Activated T-helper 1 cell treated with anti-CD3 and anti-CD28 coated beads, Interleukin-12 subunit alpha, Interleukin-12 subunit beta, Interleukin-2, Interleukin-4 antibody, amounts not matched to agents 30 ng/mL and 10 ng/mL and 1 ng/mL, durations not matched to agents 14 hours and 24 hours and 36 hours (primary cell): ENCODE measurements at regions of chr7 and their contacts with region 1.

Region 1: DNA sequence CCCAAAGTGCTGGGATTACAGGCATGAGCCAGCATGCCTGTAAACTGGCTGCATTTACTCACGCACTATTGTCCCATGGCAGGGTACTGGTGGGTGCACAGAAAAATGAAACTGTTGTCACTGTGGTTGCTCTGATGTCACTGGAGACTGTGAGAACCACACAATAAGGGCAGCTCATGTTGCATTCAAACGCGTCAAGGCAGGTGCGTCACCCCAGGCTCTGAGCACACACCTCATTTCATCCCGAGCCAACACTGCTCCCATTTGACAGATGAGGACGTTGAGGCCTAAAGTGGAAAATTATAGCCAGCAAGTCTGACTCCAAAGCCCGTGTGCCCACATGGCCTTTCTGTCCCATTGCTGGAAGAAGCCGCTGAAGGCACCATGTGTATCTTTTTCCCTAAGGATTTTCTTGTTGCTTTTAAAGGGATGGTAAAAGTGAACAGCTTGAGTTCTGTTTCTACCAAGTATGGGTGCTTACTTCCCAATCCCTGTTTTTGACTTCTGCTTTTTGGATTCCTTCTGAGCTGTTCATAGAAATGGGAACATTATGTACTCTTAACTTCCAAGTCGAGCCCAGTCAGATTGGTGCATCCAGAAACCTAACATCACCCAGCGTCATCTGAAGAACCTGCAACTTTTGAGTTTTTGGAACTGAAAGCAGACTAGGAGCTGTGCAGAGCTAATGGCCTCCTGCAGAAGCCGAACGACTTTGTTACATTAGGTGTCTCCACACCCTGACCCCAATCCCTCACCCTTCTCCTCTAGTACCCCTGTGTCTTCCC is 60.1 kb upstream of the CARD11 start:
- DNase-seq: no peak
- H3K4me3 Mint-ChIP-seq: no peak overlapping the region
- H3K27ac Mint-ChIP-seq: peak overlapping the region; percentile 32
- H3K4me1 Mint-ChIP-seq: peaks cover 70% of the 10 kb centered on the region
- H3K27me3 Mint-ChIP-seq: no peaks in the 10 kb centered on the region

Region 2: GRCh38 chr7:2956526-2957368 is 147.1 kb before region 1 on chr7:
- intact Hi-C with region 1: loop called (anchors 5 kb)
- DNase-seq: peak; percentile 44
- H3K4me3 Mint-ChIP-seq: peak overlapping the region; percentile 27
- H3K27ac Mint-ChIP-seq: peak overlapping the region; percentile 92
- H3K4me1 Mint-ChIP-seq: peaks cover 71% of the 10 kb centered on the region
- H3K27me3 Mint-ChIP-seq: no peaks in the 10 kb centered on the region

Region 3: GRCh38 chr7:3042861-3043489 is 60.8 kb before region 1 on chr7:
- intact Hi-C with region 1: loop called (anchors 2 kb)
- DNase-seq: peak; percentile 65
- H3K4me3 Mint-ChIP-seq: peak overlapping the region; percentile 97
- H3K27ac Mint-ChIP-seq: peak overlapping the region; percentile 95
- H3K4me1 Mint-ChIP-seq: peaks cover 47% of the 10 kb centered on the region
- H3K27me3 Mint-ChIP-seq: no peaks in the 10 kb centered on the region

Region 4: GRCh38 chr7:3092468-3092867 is 11.3 kb before region 1 on chr7:
- intact Hi-C with region 1: loop called (anchors 1 kb)
- DNase-seq: peak; percentile 74
- H3K4me3 Mint-ChIP-seq: peak overlapping the region; percentile 15
- H3K27ac Mint-ChIP-seq: peak overlapping the region; percentile 94
- H3K4me1 Mint-ChIP-seq: peaks cover 56% of the 10 kb centered on the region
- H3K27me3 Mint-ChIP-seq: no peaks in the 10 kb centered on the region

Region 5: GRCh38 chr7:3154912-3155494 is 51.2 kb after region 1 on chr7:
- intact Hi-C with region 1: loop called (anchors 5 kb)
- DNase-seq: peak; percentile 46
- H3K4me3 Mint-ChIP-seq: no peak overlapping the region
- H3K27ac Mint-ChIP-seq: no peak overlapping the region
- H3K4me1 Mint-ChIP-seq: peaks cover 34% of the 10 kb centered on the region
- H3K27me3 Mint-ChIP-seq: peaks cover 9% of the 10 kb centered on the region

Region 6: DNA sequence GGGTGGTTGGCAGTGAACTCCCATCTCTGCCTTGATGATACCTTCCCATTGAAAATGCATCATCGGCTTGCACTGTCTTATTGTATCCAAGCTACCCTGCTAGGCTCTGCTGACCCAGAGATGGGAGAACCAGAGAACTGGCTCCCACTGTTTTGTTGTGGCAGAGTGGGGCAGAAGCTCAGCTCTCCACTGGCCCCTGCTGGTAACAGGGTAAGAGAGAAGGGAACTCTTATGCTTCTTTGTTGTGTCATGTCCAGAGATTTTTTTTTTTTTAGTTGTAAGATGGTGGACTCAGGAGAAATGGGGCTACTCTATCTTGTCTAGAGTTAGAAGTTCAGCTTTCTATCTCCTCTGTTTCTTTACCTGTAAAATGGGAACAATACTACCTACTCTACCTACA is 96.7 kb after region 1 on chr7:
- intact Hi-C with region 1: no loop called
- DNase-seq: peak; percentile 11
- H3K4me3 Mint-ChIP-seq: no peak overlapping the region
- H3K27ac Mint-ChIP-seq: peak overlapping the region; percentile 14
- H3K4me1 Mint-ChIP-seq: no peaks in the 10 kb centered on the region
- H3K27me3 Mint-ChIP-seq: peaks cover 11% of the 10 kb centered on the region